ENCODE measurements at regions of chr16 and their contacts with region 1.

Region 1: DNA sequence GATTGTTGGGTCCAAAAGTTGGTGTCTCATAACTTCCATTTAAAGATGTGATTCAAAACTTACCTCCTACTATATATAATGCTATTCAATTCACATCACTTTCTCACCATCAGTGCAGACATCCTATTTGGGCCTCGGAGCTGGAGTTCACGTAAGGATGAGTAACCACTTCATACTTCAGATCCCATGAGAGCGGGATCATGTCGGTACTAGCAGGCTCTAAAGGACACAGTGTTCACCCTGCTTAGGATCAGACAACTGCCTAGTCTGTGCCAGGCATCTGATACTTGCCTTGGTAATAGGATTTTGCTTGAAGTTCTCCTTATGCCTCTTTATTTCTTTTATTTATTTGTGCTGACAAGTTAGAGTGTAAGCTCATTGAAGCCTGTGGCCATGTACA is 39.5 kb downstream of the RBFOX1 start:
- DNase-seq: no peak

Region 2: GRCh38 chr16:7161891-7162290 is 210.2 kb before region 1 on chr16:
- intact Hi-C with region 1: no loop called
- DNase-seq: no peak

Region 3: GRCh38 chr16:7332611-7333010 is 39.5 kb before region 1 on chr16 and contains the start of gene RBFOX1:
- intact Hi-C with region 1: loop called (anchors 5 kb)
- DNase-seq: no peak
- total RNA-seq, gene RBFOX1: 27.1 TPM